Common myeloid progenitor, CD34-positive (primary cell): ENCODE measurements at regions of chr21 and their contacts with region 1.

Region 1: DNA sequence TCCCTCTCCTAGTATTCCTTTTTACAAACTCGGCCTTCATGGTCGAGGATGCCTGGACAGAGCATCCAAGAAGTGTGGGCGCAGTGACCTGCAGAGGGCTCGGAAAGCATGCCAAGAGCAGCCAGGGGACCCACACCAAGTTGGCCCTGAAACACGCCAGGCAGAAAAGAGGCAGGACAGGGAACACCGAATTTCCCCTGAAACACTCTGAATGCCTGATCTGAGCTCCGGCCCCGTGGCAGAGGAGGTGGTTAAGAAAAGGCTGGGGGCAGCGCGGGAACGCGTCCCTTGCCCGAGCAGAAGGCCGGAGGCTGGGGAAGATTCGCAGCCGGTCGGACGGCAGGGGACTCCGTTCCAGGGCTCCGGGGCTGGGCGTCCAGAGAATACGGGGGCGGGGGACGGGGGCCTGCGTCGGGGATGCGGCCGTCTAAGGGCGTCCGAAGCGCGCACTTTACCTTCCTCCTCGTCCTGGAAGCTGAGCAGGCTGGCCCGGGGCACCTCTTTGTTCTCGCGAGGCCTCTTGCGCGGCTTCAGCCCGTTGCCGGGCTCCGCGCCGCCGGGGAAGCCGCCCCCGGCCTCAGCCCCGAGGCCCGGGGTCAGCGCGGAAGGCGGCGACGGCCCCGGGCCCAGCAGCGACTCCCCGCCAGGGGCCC is 558 bp downstream of the PAXBP1 start:
- DNase-seq: peak; percentile 55 to 79 (median 76)
- H3K4me3 ChIP-seq: peak overlapping the region; percentile 79 to 98 (median 92)
- H3K27ac ChIP-seq: peak overlapping the region; percentile 85 to 89
- H3K4me1 ChIP-seq: peaks cover 15 to 41% (median 30%) of the 10 kb centered on the region in 4 experiments
- H3K27me3 ChIP-seq: no peaks in the 10 kb centered on the region

Region 2: GRCh38 chr21:32727687-32728455 is 43.1 kb before region 1 on chr21 and contains the start of gene SYNJ1:
- CTCF ChIA-PET with region 1: interaction called, 5 read pairs
- POLR2A ChIA-PET with region 1: interaction called, 10 read pairs
- DNase-seq: peak; percentile 93 to 97 (median 96)
- H3K4me3 ChIP-seq: peak within 1 kb of the TSS; percentile 87 to 96 (median 92)
- H3K27ac ChIP-seq: peak within 1 kb of the TSS; percentile 72 to 86
- H3K4me1 ChIP-seq: peaks cover 10 to 23% (median 21%) of the 10 kb centered on the region in 4 experiments
- H3K27me3 ChIP-seq: no peaks in the 10 kb centered on the region

Region 3: GRCh38 chr21:32782698-32783097 is 11.7 kb after region 1 on chr21:
- CTCF ChIA-PET with region 1: interaction called, 10 read pairs
- POLR2A ChIA-PET with region 1: no interaction called
- DNase-seq: peak in 1 of 3 donors; percentile 21
- H3K4me3 ChIP-seq: no peak overlapping the region
- H3K27ac ChIP-seq: no peak overlapping the region
- H3K4me1 ChIP-seq: peaks cover 0 to 7% (median 3%) of the 10 kb centered on the region in 4 experiments
- H3K27me3 ChIP-seq: no peaks in the 10 kb centered on the region